ENCODE measurements at regions of chr19 and their contacts with region 1.

Region 1: GRCh38 chr19:41872775-41873647 is 4.1 kb upstream of the CD79A start:
- DNase-seq: peak; percentile 72
- ATAC-seq: peak; percentile 70
- H3K4me3 ChIP-seq: no peak overlapping the region
- H3K27ac ChIP-seq: no peak overlapping the region
- H3K4me1 ChIP-seq: peaks cover 41% of the 10 kb centered on the region
- H3K27me3 ChIP-seq: peaks cover 1 to 6% of the 10 kb centered on the region in 2 experiments; a peak in 1 of 5 replicates
- CTCF ChIP-seq: peak; percentile 91
- EP300 ChIP-seq: no peak
- POLR2A ChIP-seq: peak in 1 of 2 experiments; percentile 44; a peak in 3 of 4 replicates
- RAD21 ChIP-seq: peak; percentile 87

Region 2: GRCh38 chr19:41859618-41860418 is 13.2 kb before region 1 on chr19 and contains the start of gene RPS19:
- CTCF ChIA-PET with region 1: no interaction called
- POLR2A ChIA-PET with region 1: interaction called, 72 read pairs
- in situ Hi-C with region 1: no loop called
- intact Hi-C with region 1: no loop called
- DNase-seq: peak; percentile 97
- ATAC-seq: peak; percentile 90
- H3K4me3 ChIP-seq: peak within 1 kb of the TSS; percentile 85 to 99 (median 95)
- H3K27ac ChIP-seq: peak within 1 kb of the TSS; percentile 84
- H3K4me1 ChIP-seq: peaks cover 44% of the 10 kb centered on the region
- H3K27me3 ChIP-seq: peaks cover 0 to 6% of the 10 kb centered on the region in 2 experiments; a peak in 2 of 5 replicates
- CTCF ChIP-seq: peak; percentile 82
- EP300 ChIP-seq: peak; percentile 24 to 28; a peak in 1 of 4 replicates
- POLR2A ChIP-seq: peak; percentile 80 to 92
- RAD21 ChIP-seq: no peak; the same call in none of the 2 replicates
- total RNA-seq, gene RPS19: 4,758 and 5,028 TPM in 2 replicates

Region 3: GRCh38 chr19:41883821-41884733 is 11.1 kb after region 1 on chr19:
- CTCF ChIA-PET with region 1: interaction called, 5 read pairs
- POLR2A ChIA-PET with region 1: interaction called, 20 read pairs
- in situ Hi-C with region 1: no loop called
- intact Hi-C with region 1: no loop called
- DNase-seq: peak; percentile 93
- ATAC-seq: peak; percentile 91
- H3K4me3 ChIP-seq: peak overlapping the region; percentile 87 to 95 (median 88)
- H3K27ac ChIP-seq: peak overlapping the region; percentile 71
- H3K4me1 ChIP-seq: peaks cover 51% of the 10 kb centered on the region
- H3K27me3 ChIP-seq: no peaks in the 10 kb centered on the region; a peak in 2 of 5 replicates
- CTCF ChIP-seq: peak; percentile 41
- EP300 ChIP-seq: peak; percentile 26 to 49; a peak in 2 of 4 replicates
- POLR2A ChIP-seq: peak; percentile 55 to 74; a peak in 3 of 4 replicates
- RAD21 ChIP-seq: no peak; the same call in none of the 2 replicates

Region 4: DNA sequence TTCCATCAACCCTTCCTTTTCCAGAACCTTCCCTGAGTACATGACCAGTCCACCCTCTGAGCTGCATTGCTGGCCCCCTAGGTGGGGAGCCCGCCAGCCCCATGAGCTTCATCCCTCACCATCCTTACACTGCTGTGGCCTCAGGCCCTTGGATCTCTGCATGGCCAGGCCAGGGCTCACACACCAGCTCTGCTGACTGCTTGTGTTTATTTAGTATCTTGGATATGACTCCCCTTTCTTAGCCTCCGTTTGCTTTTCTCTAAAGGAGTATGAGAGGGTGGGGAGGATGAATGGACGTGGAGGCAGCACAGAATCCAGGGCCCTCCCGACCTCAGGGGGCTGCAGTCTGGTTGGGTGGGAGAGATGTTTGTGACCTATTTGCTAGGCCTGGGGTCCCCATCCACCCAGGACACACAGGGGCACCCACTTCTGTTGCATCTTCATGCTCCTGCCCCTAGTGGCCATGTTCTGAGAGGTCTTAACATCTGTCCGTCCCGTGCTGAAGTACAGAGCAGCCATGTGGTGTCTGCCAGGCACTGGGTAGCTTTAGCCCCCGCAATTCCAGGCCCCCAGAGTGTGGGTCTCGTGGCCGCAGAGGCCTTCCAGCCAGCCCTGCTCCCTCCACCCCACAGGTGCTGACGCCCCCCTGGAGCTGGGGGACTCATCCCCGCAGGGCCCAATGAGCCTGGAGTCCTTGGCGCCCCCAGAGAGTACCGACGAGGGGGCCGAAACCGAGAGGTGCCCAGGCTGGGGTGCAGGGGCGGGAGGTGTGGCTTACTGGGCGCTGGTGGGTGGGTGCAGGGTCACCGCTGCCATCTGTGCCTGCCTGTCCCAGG is 23.0 kb after region 1 on chr19:
- CTCF ChIA-PET with region 1: no interaction called
- POLR2A ChIA-PET with region 1: no interaction called
- in situ Hi-C with region 1: no loop called
- intact Hi-C with region 1: no loop called
- DNase-seq: no peak
- ATAC-seq: peak; percentile 54
- H3K4me3 ChIP-seq: no peak overlapping the region
- H3K27ac ChIP-seq: no peak overlapping the region
- H3K4me1 ChIP-seq: peaks cover 5% of the 10 kb centered on the region
- H3K27me3 ChIP-seq: no peaks in the 10 kb centered on the region
- CTCF ChIP-seq: no peak
- EP300 ChIP-seq: no peak
- POLR2A ChIP-seq: no peak
- RAD21 ChIP-seq: no peak

Region 5: DNA sequence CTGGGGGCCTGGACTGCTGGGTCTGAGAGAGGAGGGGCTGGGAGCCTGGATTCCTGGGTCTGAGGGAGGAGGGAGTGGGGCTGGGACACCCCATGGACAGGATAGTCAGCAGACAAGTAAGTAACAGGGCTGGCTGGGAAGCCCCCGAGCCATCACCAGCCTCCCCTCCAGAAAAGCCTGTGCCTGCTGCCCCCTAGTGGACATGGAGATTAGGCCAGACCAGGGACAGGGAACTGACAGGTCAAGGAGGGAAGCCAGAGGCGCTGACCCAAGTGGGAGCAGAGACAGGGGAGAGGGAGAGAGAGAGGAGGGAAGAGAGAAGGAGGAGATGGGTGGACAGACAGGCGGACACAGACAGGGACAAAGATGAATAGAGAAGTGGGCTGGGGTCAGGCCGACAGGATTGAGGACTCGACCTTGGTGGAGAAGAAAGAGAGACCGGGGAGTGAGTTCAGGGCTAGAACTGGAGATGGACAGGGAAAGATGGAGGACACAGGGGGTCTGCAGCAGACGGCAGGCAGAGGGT is 61.9 kb after region 1 on chr19:
- CTCF ChIA-PET with region 1: interaction called, 13 read pairs
- POLR2A ChIA-PET with region 1: no interaction called
- in situ Hi-C with region 1: no loop called
- intact Hi-C with region 1: loop called (anchors 2 kb)
- DNase-seq: peak; percentile 58
- ATAC-seq: peak; percentile 80
- H3K4me3 ChIP-seq: no peak overlapping the region
- H3K27ac ChIP-seq: no peak overlapping the region
- H3K4me1 ChIP-seq: no peaks in the 10 kb centered on the region
- H3K27me3 ChIP-seq: peaks cover 12 to 76% of the 10 kb centered on the region in 2 experiments; a peak in 4 of 5 replicates
- CTCF ChIP-seq: peak; percentile 89
- EP300 ChIP-seq: no peak
- POLR2A ChIP-seq: no peak
- RAD21 ChIP-seq: peak; percentile 59

Region 6: GRCh38 chr19:41951686-41952172 is 78.7 kb after region 1 on chr19:
- CTCF ChIA-PET with region 1: interaction called, 14 read pairs
- POLR2A ChIA-PET with region 1: interaction called, 4 read pairs
- in situ Hi-C with region 1: no loop called
- intact Hi-C with region 1: loop called (anchors 2 kb)
- DNase-seq: peak; percentile 58
- ATAC-seq: peak; percentile 87
- H3K4me3 ChIP-seq: no peak overlapping the region
- H3K27ac ChIP-seq: no peak overlapping the region
- H3K4me1 ChIP-seq: no peaks in the 10 kb centered on the region
- H3K27me3 ChIP-seq: no peaks in the 10 kb centered on the region
- CTCF ChIP-seq: peak; percentile 93
- EP300 ChIP-seq: no peak
- POLR2A ChIP-seq: no peak
- RAD21 ChIP-seq: peak; percentile 81

Measured in HepG2 (cell line).